WTC11 (cell line): ENCODE measurements at regions of chr1 and their contacts with region 1.

Region 1: GRCh38 chr1:12124693-12125421 is 41.9 kb upstream of the TNFRSF1B start:
- DNase-seq: peak; percentile 78
- ATAC-seq: peak; percentile 40; the same call in 1 of the 2 replicates
- H3K4me3 Mint-ChIP-seq: no peak overlapping the region
- H3K27ac Mint-ChIP-seq: 0 out of 2 replicates have a peak overlapping the region, but pooled peaks have one; percentile 33
- H3K4me1 Mint-ChIP-seq: peaks cover 3% of the 10 kb centered on the region; the same call in 1 of the 2 replicates
- H3K27me3 Mint-ChIP-seq: no peaks in the 10 kb centered on the region
- CTCF ChIP-seq: peak; percentile 97

Region 2: GRCh38 chr1:12022691-12023090 is 102.2 kb before region 1 on chr1:
- CTCF ChIA-PET with region 1: no interaction called
- POLR2A ChIA-PET with region 1: no interaction called
- DNase-seq: no peak
- ATAC-seq: no peak
- H3K4me3 Mint-ChIP-seq: no peak overlapping the region
- H3K27ac Mint-ChIP-seq: no peak overlapping the region
- H3K4me1 Mint-ChIP-seq: peaks cover 4% of the 10 kb centered on the region
- H3K27me3 Mint-ChIP-seq: no peaks in the 10 kb centered on the region
- CTCF ChIP-seq: no peak

Region 3: DNA sequence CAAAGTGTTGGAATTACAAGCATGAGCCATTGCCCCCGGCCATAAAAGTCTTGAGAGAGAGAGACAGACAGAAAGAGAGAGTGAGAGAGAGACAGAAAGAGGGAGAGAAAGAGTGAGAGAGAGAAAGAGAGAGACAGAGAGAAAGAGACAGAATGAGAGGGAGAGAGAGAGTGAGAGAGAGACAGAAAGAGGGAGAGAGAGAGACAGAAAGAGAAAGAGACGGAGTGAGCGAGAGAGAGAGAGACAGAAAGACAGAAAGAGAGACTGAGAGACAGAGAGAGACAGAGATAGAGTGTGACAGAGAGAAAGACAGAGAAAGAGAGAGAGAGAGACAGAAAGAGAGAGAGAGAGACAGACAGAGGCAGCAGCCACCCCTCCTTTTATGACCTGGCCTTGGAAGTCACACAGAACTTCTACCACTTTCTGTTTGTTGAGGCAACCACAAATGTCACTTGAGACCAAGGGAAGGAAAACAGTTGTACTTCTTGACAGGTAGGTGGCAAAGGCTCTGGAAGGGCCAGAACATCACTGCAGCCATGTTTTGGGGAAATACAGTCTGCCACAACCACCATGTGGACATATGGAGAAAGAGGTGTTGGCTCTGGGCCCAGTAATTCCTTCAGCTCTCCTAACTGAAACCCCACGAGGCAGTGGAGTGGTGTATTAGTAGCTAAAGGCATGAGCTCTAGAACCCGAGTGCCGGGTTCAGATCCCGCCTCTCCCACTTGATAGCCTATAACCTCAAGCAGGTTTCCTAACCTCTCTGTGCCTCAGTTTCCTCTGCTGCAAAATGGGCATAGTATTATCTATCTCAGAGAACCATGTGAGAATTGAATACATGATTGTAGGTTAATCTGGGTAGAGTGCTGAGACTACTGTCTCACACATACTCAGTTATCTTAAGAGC is 11.2 kb before region 1 on chr1:
- CTCF ChIA-PET with region 1: interaction called, 13 read pairs
- POLR2A ChIA-PET with region 1: no interaction called
- DNase-seq: no peak
- ATAC-seq: no peak
- H3K4me3 Mint-ChIP-seq: no peak overlapping the region
- H3K27ac Mint-ChIP-seq: no peak overlapping the region
- H3K4me1 Mint-ChIP-seq: no peaks in the 10 kb centered on the region
- H3K27me3 Mint-ChIP-seq: no peaks in the 10 kb centered on the region
- CTCF ChIP-seq: no peak

Region 4: GRCh38 chr1:12153181-12153785 is 28.4 kb after region 1 on chr1:
- CTCF ChIA-PET with region 1: interaction called, 15 read pairs
- POLR2A ChIA-PET with region 1: no interaction called
- DNase-seq: no peak
- ATAC-seq: no peak
- H3K4me3 Mint-ChIP-seq: no peak overlapping the region
- H3K27ac Mint-ChIP-seq: no peak overlapping the region
- H3K4me1 Mint-ChIP-seq: peaks cover 11% of the 10 kb centered on the region
- H3K27me3 Mint-ChIP-seq: peaks cover 16% of the 10 kb centered on the region
- CTCF ChIP-seq: no peak

Region 5: DNA sequence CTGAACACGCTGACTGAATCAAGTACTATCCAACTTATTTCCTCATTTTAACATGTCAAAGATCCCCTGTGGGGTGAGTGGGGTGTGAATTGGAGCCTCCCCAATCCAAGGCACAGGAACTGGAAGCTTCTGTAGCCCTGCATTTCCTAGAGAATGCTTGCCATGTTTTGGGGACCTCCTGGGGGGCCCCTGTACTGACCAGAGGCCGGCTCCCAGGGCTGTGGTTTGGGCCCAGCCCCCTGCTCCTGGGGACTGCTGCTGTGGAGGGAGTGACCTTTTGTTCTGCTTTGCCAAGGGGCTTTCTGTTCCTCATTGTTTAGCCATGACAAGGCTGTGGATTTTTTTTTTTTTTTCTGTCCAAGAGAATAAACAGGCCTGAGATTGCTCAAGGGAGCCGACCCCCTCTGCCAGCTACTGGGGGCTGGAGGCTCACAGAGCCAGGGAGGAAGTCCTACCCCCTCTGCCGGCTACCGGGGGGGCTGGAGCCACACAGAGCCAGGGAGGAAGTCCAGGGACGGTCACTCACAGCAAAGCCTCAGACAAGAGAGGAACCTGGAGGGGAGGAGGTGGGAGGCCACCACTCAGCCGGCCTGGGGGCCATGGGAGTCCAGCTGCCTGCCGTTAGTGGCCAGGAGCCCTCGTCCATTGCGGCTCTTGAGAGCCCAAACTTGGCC is 59.3 kb after region 1 on chr1:
- CTCF ChIA-PET with region 1: interaction called, 18 read pairs
- POLR2A ChIA-PET with region 1: no interaction called
- DNase-seq: no peak
- ATAC-seq: no peak
- H3K4me3 Mint-ChIP-seq: no peak overlapping the region
- H3K27ac Mint-ChIP-seq: 0 out of 2 replicates have a peak overlapping the region, but pooled peaks have one; percentile 32
- H3K4me1 Mint-ChIP-seq: peaks cover 23% of the 10 kb centered on the region
- H3K27me3 Mint-ChIP-seq: no peaks in the 10 kb centered on the region; the same call in 1 of the 2 replicates
- CTCF ChIP-seq: no peak

Region 6: GRCh38 chr1:12244078-12244477 is 119.2 kb after region 1 on chr1:
- CTCF ChIA-PET with region 1: interaction called, 22 read pairs
- POLR2A ChIA-PET with region 1: no interaction called
- DNase-seq: peak; percentile 25
- ATAC-seq: peak; percentile 52; the same call in 1 of the 2 replicates
- H3K4me3 Mint-ChIP-seq: no peak overlapping the region
- H3K27ac Mint-ChIP-seq: peak overlapping the region; percentile 51; the same call in 1 of the 2 replicates
- H3K4me1 Mint-ChIP-seq: peaks cover 34% of the 10 kb centered on the region
- H3K27me3 Mint-ChIP-seq: no peaks in the 10 kb centered on the region
- CTCF ChIP-seq: peak; percentile 23; the same call in 1 of the 2 replicates